ENCODE measurements at regions of chr17 and their contacts with region 1.

Region 1: DNA sequence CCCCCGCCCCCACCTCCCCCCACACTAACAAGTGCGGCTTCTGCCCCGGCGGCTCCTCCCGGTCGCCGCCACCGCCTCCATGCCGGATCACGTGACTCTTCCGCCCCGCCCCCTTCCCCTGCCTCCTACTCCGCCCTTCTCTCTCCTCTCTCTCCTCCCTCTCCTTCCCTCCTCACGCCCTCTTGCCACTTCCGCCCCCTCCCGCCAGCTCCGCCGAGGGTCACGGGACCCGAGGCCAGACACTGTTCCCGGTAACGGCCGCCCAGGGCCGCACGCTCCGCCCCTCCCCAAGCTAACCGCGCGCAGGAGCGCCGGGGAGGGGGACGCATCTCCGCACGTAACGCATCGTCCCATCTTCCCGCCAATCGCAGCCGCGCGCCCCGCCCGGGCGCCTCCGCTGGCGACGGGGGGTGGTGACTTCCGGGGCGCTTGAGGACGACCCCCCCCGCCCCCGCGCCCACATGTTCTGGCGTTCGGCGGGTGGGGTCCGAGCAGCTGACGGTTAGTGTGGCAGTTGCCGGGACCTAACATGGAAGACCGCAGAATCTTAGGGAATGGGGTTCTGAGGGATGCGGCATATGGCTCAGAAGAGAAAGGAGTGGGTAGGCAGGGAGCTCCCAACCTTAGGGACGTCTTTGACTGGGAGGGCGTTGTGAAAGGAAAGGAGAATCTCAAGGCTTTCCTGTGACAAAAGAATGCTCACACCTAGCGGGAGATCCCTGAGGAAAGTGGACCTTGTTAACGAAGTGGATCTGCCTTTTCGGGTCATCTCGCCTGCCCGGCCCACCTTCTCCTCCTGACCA is at the start of gene USP32:
- DNase-seq: peak; percentile 99
- ATAC-seq: peak; percentile 93
- H3K4me3 Mint-ChIP-seq: peak within 1 kb of the TSS; percentile 77
- H3K27ac Mint-ChIP-seq: peak within 1 kb of the TSS; percentile 99
- H3K4me1 Mint-ChIP-seq: peaks cover 41% of the 10 kb centered on the region
- H3K27me3 Mint-ChIP-seq: no peaks in the 10 kb centered on the region
- total RNA-seq, gene USP32: 32.3 to 33.1 TPM

Region 2: GRCh38 chr17:59155439-59156182 is 1236.6 kb before region 1 on chr17 and contains the start of gene PRR11:
- CTCF ChIA-PET with region 1: no interaction called
- POLR2A ChIA-PET with region 1: no interaction called
- intact Hi-C with region 1: loop called in 1 of 2 experiments (anchors 1 kb)
- DNase-seq: peak; percentile 96
- ATAC-seq: peak; percentile 89
- H3K4me3 Mint-ChIP-seq: no peak within 1 kb of the TSS
- H3K27ac Mint-ChIP-seq: no peak within 1 kb of the TSS
- H3K4me1 Mint-ChIP-seq: peaks cover 37% of the 10 kb centered on the region
- H3K27me3 Mint-ChIP-seq: no peaks in the 10 kb centered on the region
- total RNA-seq, gene PRR11: 73.6 to 95.9 TPM

Region 3: DNA sequence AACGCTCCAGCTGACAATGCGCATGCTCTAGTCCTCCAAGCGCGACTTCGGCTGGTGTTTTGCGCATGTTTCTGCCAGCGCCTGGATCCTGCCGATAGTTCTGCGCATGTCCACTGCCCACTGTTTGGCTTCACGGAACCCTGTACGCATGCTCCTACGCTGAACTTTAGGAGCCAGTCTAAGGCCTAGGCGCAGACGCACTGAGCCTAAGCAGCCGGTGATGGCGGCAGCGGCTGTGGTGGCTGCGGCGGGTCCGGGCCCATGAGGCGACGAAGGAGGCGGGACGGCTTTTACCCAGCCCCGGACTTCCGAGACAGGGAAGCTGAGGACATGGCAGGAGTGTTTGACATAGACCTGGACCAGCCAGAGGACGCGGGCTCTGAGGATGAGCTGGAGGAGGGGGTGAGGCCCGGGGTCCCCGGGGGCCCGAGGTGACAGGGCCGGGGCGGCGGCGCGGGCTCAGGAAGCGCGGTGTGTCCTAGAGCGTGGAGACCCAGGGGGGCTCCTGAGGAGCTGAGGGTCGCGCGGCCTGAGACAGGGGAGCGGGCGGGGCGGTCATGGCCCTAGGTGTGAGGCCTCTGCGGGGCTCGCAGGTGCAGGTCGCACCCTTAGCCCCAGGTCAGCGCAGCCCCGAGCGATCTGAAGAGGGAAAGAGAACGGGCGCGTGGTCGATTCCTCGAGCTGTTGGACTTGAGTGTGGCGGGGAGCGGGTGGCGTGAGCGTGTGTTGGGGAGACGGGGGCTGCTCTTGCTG is 499.1 kb before region 1 on chr17 and contains the starts of genes RPS6KB1 and TUBD1:
- CTCF ChIA-PET with region 1: no interaction called
- POLR2A ChIA-PET with region 1: no interaction called
- intact Hi-C with region 1: loop called in 1 of 2 experiments (anchors 2 kb)
- DNase-seq: peak; percentile 98
- ATAC-seq: peak; percentile 97
- H3K4me3 Mint-ChIP-seq: peak within 1 kb of the TSS; percentile 99
- H3K27ac Mint-ChIP-seq: peak within 1 kb of the TSS; percentile 97
- H3K4me1 Mint-ChIP-seq: peaks cover 45% of the 10 kb centered on the region
- H3K27me3 Mint-ChIP-seq: no peaks in the 10 kb centered on the region
- total RNA-seq, gene RPS6KB1: 52.6 to 54.5 TPM
- total RNA-seq, gene TUBD1: 10.6 to 11.0 TPM

Region 4: GRCh38 chr17:60135151-60135950 is 256.9 kb before region 1 on chr17:
- CTCF ChIA-PET with region 1: no interaction called
- POLR2A ChIA-PET with region 1: no interaction called
- intact Hi-C with region 1: loop called in 1 of 2 experiments (anchors 1 kb)
- DNase-seq: peak; percentile 93
- ATAC-seq: peak; percentile 98
- H3K4me3 Mint-ChIP-seq: peak overlapping the region; percentile 90
- H3K27ac Mint-ChIP-seq: peak overlapping the region; percentile 91
- H3K4me1 Mint-ChIP-seq: peaks cover 26% of the 10 kb centered on the region
- H3K27me3 Mint-ChIP-seq: peaks cover 19% of the 10 kb centered on the region

Region 5: GRCh38 chr17:60381958-60382357 is 10.3 kb before region 1 on chr17:
- CTCF ChIA-PET with region 1: no interaction called
- POLR2A ChIA-PET with region 1: no interaction called
- intact Hi-C with region 1: no loop called
- DNase-seq: no peak
- ATAC-seq: no peak
- H3K4me3 Mint-ChIP-seq: no peak overlapping the region
- H3K27ac Mint-ChIP-seq: no peak overlapping the region
- H3K4me1 Mint-ChIP-seq: peaks cover 29% of the 10 kb centered on the region
- H3K27me3 Mint-ChIP-seq: no peaks in the 10 kb centered on the region

Region 6: GRCh38 chr17:60421273-60421934 is 29.2 kb after region 1 on chr17:
- CTCF ChIA-PET with region 1: interaction called, 4 read pairs
- POLR2A ChIA-PET with region 1: interaction called, 5 read pairs
- intact Hi-C with region 1: loop called in 1 of 2 experiments (anchors 1 kb)
- DNase-seq: peak; percentile 89
- ATAC-seq: peak; percentile 99
- H3K4me3 Mint-ChIP-seq: peak overlapping the region; percentile 61
- H3K27ac Mint-ChIP-seq: no peak overlapping the region
- H3K4me1 Mint-ChIP-seq: peaks cover 9% of the 10 kb centered on the region
- H3K27me3 Mint-ChIP-seq: no peaks in the 10 kb centered on the region

Region 7: DNA sequence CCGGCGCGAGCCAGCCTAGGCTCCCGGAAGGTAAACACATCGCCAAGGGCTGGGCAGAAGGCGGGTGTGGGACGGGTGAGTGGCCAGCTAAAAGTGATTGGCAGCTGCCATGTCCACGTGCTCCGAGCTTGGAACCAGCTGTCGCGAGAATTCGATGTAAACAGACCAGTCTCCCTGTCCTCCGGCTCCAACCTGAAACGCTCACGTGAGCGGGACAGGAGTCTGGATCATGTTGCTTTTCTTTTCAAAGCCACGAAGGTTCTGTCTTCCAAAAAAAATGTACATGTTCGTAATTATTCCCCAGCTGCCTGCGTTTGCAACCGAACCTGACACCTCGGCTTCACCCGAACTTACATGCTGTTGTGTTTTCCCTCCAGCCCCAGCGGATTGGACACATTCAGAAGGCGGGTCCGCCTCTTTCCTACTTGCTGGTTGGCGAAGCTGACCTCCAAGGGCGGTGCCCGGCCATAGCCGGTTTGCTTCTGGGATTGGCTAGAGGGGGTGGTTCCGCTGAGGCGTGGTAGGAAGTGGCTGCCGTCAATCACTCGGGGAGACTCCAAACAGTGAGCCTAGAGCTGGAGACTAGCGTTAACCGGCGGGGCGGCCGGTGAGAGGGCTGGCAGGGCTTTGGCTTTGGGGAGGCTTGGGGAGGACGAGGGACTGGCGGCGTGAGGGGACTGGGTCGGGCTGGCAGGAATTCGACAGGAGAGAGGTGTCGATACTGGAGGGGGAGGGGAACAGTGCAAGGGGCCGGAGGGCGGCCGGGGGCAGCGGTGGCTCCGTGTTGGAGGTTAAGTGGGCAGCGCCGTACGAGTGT is 285.3 kb after region 1 on chr17 and contains the start of gene BCAS3:
- CTCF ChIA-PET with region 1: no interaction called
- POLR2A ChIA-PET with region 1: interaction called, 5 read pairs
- intact Hi-C with region 1: loop called in 1 of 2 experiments (anchors 1 kb)
- DNase-seq: peak; percentile 98
- ATAC-seq: peak; percentile 97
- H3K4me3 Mint-ChIP-seq: peak within 1 kb of the TSS; percentile 95
- H3K27ac Mint-ChIP-seq: peak within 1 kb of the TSS; percentile 84
- H3K4me1 Mint-ChIP-seq: peaks cover 16% of the 10 kb centered on the region
- H3K27me3 Mint-ChIP-seq: no peaks in the 10 kb centered on the region
- total RNA-seq, gene BCAS3: 7.2 to 7.5 TPM

Region 8: GRCh38 chr17:61380836-61381525 is 988.7 kb after region 1 on chr17:
- CTCF ChIA-PET with region 1: no interaction called
- POLR2A ChIA-PET with region 1: no interaction called
- intact Hi-C with region 1: no loop called
- DNase-seq: no peak
- ATAC-seq: no peak
- H3K4me3 Mint-ChIP-seq: no peak overlapping the region
- H3K27ac Mint-ChIP-seq: no peak overlapping the region
- H3K4me1 Mint-ChIP-seq: no peaks in the 10 kb centered on the region
- H3K27me3 Mint-ChIP-seq: no peaks in the 10 kb centered on the region